Prostate gland (tissue), 2 donors: ENCODE measurements at regions of chr2 and their contacts with region 1.

Region 1: DNA sequence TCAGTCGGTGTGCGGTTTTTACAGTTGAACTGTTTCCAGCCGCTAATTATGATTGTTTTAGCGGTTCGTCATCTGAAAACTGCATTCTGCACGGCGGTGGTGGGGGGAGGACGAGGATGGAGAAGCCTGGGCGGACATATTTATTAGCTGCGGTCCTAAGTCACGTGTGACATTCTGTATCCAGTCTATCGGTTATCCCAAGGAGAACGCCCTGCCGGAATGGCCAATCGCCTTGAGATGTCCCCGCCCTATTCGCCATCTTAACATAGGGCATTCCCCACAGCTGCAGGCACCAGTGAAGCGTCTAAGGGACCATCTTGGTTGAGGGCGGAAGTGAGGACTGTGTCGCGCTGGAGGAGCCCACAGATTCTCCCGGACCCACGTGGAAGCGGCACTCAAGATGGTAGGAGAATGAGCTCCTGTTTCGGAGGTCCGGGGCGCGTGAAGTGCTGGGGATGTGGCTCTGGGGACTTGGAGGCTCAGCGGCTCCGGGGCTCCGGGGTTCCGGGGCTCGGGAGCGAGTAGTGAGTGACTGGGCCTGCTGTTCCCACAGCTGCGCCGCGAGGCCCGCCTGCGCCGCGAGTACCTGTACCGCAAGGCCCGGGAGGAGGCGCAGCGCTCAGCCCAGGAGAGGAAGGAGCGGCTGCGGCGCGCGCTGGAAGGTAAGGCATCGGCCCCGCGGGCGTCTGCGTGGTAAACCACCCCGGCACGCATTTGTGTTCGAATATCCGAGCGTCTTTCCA is at the start of gene IMP4:
- DNase-seq: peak; percentile 99
- H3K4me3 ChIP-seq: peak within 1 kb of the TSS; percentile 71
- H3K27ac ChIP-seq: peak within 1 kb of the TSS; percentile 91 to 92
- H3K4me1 ChIP-seq: no peaks in the 10 kb centered on the region
- H3K27me3 ChIP-seq: no peaks in the 10 kb centered on the region
- CTCF ChIP-seq: peak in 3 of 4 experiments; percentile 11 to 50 (median 48)
- POLR2A ChIP-seq: peak; percentile 7
- total RNA-seq, gene IMP4: 71.4 to 106 TPM

Region 2: DNA sequence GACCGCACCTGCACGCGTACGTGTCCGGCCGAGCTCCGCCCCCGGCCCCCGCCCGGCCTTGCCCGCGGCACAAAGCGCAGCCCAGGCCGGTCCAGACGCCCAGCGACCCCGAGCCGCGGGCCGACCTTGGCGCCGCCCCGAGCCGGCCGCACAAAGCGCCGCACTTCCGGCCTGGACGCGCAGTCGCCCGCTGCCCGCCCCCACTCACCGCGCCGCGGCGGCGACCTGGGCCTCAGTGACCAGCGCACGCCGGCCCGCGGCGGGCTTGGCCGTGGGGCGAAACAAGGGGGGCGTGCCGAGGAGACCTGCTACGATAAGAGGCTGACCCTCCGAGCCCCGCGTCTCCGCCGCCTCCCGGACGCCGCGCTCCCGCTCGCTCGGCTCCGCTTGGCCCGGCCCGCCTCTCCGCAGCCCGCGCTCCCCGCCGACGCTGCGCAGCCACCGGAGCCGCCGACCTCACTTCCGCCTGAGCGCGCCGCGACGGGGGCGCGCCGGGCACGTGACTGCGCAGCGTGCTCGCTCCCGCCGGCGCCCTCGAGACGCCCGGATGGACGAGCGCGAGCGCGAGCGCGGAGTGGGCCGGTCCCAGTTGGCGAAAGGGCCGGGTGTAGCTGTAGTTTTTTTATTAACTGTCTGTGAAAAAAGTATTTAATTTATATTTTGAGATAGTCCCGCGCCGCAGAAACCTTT is 750.4 kb after region 1 on chr2 and contains the start of gene FAM168B:
- intact Hi-C with region 1: loop called (anchors 10 kb)
- DNase-seq: peak; percentile 81
- H3K4me3 ChIP-seq: peak within 1 kb of the TSS; percentile 86 to 93
- H3K27ac ChIP-seq: peak within 1 kb of the TSS; percentile 90 to 98
- H3K4me1 ChIP-seq: no peaks in the 10 kb centered on the region
- H3K27me3 ChIP-seq: no peaks in the 10 kb centered on the region
- CTCF ChIP-seq: no peak
- POLR2A ChIP-seq: peak; percentile 80
- total RNA-seq, gene FAM168B: 125 to 192 TPM

Region 3: DNA sequence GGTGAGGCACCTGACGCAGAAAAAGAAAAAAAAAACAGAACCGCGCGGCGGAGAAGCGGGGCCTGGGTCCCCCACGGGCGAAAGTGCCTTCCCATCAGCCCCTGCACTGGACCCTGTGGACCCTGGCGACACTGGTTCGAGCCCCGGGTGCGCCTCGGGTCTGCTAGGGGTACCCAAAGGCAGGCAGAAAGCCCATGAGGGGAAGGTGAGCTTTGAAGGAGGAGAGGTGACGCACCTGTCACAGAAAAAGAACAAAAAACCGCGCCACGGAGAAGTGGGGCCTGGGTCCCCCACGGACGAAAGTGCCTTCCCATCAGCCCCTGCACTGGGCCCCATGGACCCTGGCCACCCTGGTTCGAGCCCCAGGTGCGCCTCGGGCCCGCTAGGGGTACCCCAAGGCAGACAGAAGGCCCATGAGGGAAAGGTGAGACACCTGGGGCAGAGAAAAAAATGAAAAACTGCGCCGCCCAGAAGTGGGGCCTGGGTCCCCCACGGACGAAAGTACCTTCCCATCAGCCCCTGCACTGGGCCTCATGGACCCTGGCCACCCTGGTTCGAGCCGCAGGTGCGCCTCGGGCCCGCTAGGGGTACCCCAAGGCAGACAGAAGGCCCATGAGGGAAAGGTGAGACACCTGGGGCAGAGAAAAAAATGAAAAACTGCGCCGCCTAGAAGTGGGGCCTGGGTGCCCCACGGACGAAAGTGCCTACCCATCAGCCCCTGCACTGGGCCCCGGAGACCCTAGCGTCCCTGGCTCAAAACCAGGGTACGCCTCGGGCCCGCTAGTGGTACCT is 1412.4 kb after region 1 on chr2:
- intact Hi-C with region 1: no loop called
- DNase-seq: no peak
- H3K4me3 ChIP-seq: no peak overlapping the region
- H3K27ac ChIP-seq: no peak overlapping the region
- H3K4me1 ChIP-seq: no peaks in the 10 kb centered on the region
- H3K27me3 ChIP-seq: no peaks in the 10 kb centered on the region
- CTCF ChIP-seq: no peak
- POLR2A ChIP-seq: no peak